ENCODE measurements at regions of chr10 and their contacts with region 1.

Region 1: DNA sequence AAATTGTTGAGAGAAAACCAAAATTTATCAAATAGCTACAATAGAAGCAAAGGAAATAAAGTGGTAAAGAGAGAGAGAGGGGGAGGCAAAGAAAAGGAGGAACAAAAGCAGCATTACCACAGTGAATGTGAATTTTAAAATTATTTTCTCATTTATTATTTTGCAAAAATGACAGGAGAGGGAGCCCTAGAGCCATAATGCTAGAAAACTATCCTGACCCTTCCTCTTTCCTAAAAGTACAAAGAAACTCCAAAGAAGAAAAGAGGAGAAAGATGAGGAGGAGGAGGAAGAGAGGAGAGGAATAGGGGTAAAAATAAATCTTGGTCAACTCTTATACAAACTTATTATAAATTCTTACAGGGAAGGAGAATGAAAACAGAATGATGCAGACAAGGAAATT is 921.5 kb downstream of the NRG3 start:
- DNase-seq: peak; percentile 6
- H3K4me3 ChIP-seq: no peak overlapping the region
- H3K27ac ChIP-seq: no peak overlapping the region
- H3K4me1 ChIP-seq: no peaks in the 10 kb centered on the region
- H3K27me3 ChIP-seq: no peaks in the 10 kb centered on the region
- CTCF ChIP-seq: peak in 1 of 2 donors; percentile 18
- POLR2A ChIP-seq: no peak

Region 2: DNA sequence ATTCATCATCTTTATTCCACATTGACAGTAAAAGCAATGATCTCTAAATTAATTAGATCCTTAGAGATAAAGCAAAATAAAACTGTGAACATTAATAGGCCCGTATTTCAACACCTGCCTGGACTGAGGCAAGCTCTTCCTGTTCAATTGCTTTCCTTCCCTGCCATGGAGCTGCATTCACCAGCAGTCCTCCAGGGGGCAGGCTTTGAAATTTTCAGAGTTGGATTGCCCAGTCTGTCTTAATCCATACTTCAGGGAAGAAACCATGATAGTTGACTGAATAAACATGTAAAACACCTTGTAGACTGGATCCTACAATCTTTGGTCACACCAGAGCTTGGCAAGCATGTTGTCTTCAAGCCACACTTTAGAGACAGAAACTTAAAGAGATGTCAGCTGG is 15.1 kb after region 1 on chr10:
- CTCF ChIA-PET with region 1: interaction called, 10 read pairs
- POLR2A ChIA-PET with region 1: no interaction called
- dilution Hi-C with region 1: no loop called
- intact Hi-C with region 1: no loop called
- DNase-seq: peak; percentile 21
- H3K4me3 ChIP-seq: no peak overlapping the region
- H3K27ac ChIP-seq: no peak overlapping the region
- H3K4me1 ChIP-seq: no peaks in the 10 kb centered on the region
- H3K27me3 ChIP-seq: no peaks in the 10 kb centered on the region
- CTCF ChIP-seq: peak; percentile 52 to 60
- POLR2A ChIP-seq: no peak

Region 3: GRCh38 chr10:82826132-82826531 is 29.6 kb after region 1 on chr10:
- CTCF ChIA-PET with region 1: no interaction called
- POLR2A ChIA-PET with region 1: no interaction called
- dilution Hi-C with region 1: no loop called
- intact Hi-C with region 1: no loop called
- DNase-seq: no peak
- H3K4me3 ChIP-seq: no peak overlapping the region
- H3K27ac ChIP-seq: no peak overlapping the region
- H3K4me1 ChIP-seq: no peaks in the 10 kb centered on the region
- H3K27me3 ChIP-seq: no peaks in the 10 kb centered on the region
- CTCF ChIP-seq: no peak
- POLR2A ChIP-seq: no peak

Region 4: DNA sequence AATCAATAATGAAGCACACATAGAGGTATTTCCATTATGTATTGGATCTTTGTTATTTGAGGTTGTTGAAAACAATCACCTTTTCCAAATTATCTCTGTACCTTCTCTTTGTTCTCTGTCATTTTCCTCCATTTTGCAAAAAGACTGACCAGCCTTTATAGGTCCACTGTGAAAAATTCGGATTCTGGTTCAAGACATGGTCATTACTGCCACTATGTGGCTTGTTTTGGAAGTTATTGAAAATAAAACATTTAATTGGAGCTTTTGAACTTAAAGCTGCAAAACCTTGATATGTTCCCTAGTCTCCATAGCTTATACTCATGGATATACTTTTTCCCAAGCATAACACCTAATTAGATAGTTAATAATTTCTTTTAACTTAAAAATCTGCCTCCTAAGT is 172.9 kb after region 1 on chr10:
- CTCF ChIA-PET with region 1: interaction called, 23 read pairs
- POLR2A ChIA-PET with region 1: no interaction called
- dilution Hi-C with region 1: no loop called
- intact Hi-C with region 1: loop called (anchors 5 kb)
- DNase-seq: peak; percentile 29
- H3K4me3 ChIP-seq: no peak overlapping the region
- H3K27ac ChIP-seq: no peak overlapping the region
- H3K4me1 ChIP-seq: no peaks in the 10 kb centered on the region
- H3K27me3 ChIP-seq: no peaks in the 10 kb centered on the region
- CTCF ChIP-seq: peak in 1 of 2 donors; percentile 22
- POLR2A ChIP-seq: no peak

Region 5: DNA sequence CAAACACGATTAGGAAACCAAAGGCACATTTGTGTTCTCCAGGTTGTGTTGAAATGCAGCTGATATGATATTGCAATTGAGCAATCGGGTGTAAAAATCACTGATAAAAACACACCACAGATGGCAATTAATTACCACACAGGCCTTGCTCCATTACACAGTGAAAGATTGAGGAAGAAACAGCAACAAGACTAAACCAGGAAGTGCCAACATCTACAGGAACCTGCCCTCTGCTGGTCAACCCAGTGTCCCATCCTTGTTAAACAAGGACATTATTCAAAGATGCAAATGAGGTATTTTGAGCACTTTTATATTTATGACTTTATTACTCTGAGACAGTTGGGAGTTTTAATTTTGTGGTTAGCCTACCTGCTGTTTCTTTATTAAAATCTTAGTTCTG is 577.2 kb after region 1 on chr10:
- CTCF ChIA-PET with region 1: no interaction called
- POLR2A ChIA-PET with region 1: no interaction called
- dilution Hi-C with region 1: no loop called
- intact Hi-C with region 1: loop called (anchors 1 kb)
- DNase-seq: peak; percentile 40
- H3K4me3 ChIP-seq: no peak overlapping the region
- H3K27ac ChIP-seq: no peak overlapping the region
- H3K4me1 ChIP-seq: no peaks in the 10 kb centered on the region
- H3K27me3 ChIP-seq: no peaks in the 10 kb centered on the region
- CTCF ChIP-seq: peak; percentile 32 to 50
- POLR2A ChIP-seq: no peak

Measured in endothelial cell of umbilical vein (primary cell).